Activated CD8-positive, alpha-beta T cell treated with anti-CD3 and anti-CD28 coated beads, Interleukin-2, amount 10 ng/mL, durations not matched to agents 7 days and 5 days (primary cell): ENCODE measurements at regions of chr5 and their contacts with region 1.

Region 1: DNA sequence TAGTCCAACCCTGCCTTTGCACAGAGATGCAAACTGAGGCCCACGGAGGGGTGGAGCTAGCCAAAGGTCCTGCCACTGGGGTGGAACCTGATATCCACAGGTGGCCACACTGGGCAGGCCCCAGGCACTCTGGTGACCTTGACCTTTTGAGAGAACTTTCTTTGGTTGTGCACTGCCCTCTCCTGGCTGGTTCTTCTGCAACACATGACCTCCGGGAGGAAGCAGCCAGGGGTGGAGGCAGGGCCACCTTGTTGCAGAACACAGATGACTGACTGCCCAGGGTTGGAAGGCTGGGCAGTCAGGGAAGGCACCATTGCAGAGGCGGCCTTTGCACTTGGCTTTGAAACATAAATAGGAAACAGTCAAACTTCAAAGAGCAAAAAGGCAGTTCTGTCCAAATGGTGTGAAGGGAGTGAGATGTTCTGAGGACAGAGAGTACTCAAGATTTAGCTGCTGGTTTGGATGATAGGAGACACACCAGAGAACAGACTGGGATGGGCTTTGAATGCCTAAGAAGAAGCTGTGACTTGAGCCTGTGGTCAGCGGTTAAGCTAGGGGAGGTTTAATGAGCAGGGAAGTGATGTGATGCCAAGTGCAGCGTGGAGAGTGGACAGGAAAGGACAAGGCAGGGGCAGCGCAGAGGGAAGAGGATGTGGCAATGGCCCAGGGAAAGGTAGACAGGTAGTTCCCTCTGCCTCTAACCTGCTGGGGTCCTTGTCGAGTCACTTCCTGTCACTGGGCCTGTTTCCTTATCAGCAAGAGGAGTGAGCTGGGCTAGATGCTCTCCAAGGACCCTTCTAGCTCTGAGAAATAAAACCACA is 6.8 kb upstream of the TCOF1 start:
- DNase-seq: peak; percentile 77
- ATAC-seq: peak; percentile 90
- H3K4me3 Mint-ChIP-seq: peak overlapping the region; percentile 22
- H3K27ac Mint-ChIP-seq: peak overlapping the region; percentile 89
- H3K4me1 Mint-ChIP-seq: peaks cover 30% of the 10 kb centered on the region
- H3K27me3 Mint-ChIP-seq: no peaks in the 10 kb centered on the region

Region 2: DNA sequence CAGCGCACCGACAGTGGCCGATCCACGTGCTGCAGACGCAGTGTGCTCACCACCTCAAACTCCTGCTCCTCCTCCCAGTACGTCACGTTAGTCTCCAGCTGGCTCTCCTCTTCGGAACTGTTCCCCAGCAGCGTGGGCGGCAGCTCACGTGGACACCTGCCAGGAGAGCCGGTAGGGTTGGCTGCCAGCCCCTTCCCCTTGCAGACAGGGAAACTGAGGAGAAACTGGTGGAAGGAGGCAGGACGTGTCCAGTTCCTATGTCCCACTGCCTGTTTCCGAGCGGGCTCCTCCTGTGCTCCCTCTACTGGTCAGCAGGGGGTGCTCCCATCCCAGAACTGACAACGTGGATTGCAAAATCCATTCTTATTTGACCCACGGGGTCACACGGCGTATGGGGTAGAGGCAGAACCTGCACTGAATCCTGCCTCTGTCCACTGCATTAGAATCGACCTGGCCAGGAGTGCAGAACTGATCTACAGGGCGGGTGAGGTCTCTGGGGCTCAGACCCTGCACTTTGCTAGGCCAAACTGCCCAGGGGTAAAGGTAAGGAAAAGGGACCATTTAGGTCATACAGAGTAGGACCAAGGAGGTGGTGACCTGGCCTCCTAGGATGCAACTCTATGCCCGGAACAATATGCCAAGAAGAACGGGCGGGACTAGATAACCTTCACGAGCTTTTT is 220.8 kb before region 1 on chr5:
- CTCF ChIA-PET with region 1: interaction called, 11 read pairs
- POLR2A ChIA-PET with region 1: interaction called, 3 read pairs
- DNase-seq: peak; percentile 72
- ATAC-seq: peak; percentile 66
- H3K4me3 Mint-ChIP-seq: no peak overlapping the region
- H3K27ac Mint-ChIP-seq: no peak overlapping the region
- H3K4me1 Mint-ChIP-seq: peaks cover 15% of the 10 kb centered on the region
- H3K27me3 Mint-ChIP-seq: no peaks in the 10 kb centered on the region

Region 3: DNA sequence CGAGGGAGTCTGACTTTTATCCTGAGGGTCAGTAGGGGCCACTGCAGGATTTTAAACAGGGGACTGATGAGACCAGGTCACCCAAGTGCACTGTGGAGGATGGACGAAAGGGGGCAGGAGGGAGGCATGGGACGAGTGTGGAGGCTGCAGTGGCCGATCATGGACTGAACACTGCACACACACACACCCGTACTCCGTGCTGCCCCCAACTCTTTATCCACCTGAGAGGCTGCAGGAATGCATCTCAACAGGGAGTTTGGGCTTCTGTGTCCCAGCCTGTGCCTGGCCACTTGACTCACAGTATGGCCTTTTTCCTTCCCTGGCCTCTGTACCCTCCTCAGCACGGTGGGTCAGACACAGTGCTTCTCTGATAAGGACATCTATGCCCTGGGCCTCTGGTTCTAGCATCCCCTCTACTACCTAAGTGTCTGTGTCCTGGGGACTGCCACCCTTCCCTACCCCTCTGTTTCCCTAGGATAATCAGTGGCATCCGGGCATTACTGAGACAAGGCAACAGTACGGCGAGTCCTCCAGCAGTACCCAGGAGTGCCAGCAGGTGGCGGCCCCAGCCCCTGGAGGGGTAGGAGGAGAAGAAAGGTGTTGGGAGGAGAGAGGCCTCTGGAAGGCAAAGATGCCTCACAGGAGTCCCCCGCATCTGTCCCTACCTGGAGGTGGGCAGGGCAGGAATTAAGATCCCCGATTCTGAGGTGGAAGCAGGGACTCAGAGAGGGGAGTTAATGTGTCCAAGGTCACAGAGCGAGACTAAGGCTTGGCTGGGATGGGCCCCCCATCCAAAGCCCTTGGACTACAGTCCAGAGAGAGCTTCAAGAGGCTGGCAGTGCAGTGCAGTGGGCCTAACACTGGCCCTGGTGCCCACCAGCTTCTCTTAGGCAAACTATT is 189.2 kb before region 1 on chr5:
- CTCF ChIA-PET with region 1: interaction called, 11 read pairs
- POLR2A ChIA-PET with region 1: no interaction called
- DNase-seq: peak; percentile 90
- ATAC-seq: peak; percentile 94
- H3K4me3 Mint-ChIP-seq: no peak overlapping the region
- H3K27ac Mint-ChIP-seq: no peak overlapping the region
- H3K4me1 Mint-ChIP-seq: peaks cover 12% of the 10 kb centered on the region
- H3K27me3 Mint-ChIP-seq: peaks cover 16% of the 10 kb centered on the region

Region 4: GRCh38 chr5:150333400-150333799 is 17.3 kb before region 1 on chr5:
- CTCF ChIA-PET with region 1: interaction called, 11 read pairs
- POLR2A ChIA-PET with region 1: no interaction called
- DNase-seq: no peak
- ATAC-seq: no peak
- H3K4me3 Mint-ChIP-seq: no peak overlapping the region
- H3K27ac Mint-ChIP-seq: no peak overlapping the region
- H3K4me1 Mint-ChIP-seq: peaks cover 4% of the 10 kb centered on the region
- H3K27me3 Mint-ChIP-seq: peaks cover 15% of the 10 kb centered on the region

Region 5: DNA sequence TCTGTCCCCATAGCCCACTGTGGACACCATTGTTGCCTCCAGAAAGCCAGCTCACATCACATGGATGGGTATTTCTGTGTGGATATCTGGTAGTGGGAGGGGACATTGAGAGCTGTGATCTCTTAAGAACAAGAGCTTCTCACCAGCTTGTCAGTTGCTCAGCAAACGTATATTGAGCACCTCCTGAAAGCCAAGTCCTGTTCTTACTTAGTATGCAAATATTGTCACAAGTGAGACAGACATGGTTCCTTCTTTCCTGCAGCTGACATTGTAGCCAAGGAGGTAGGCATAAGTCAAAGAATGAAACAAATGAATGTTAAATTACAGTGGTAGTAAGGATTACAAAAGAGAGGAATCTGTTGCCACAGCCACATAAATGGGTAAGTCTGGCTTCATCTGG is 10.6 kb after region 1 on chr5:
- CTCF ChIA-PET with region 1: interaction called, 14 read pairs
- POLR2A ChIA-PET with region 1: interaction called, 4 read pairs
- DNase-seq: no peak
- ATAC-seq: no peak
- H3K4me3 Mint-ChIP-seq: no peak overlapping the region
- H3K27ac Mint-ChIP-seq: no peak overlapping the region
- H3K4me1 Mint-ChIP-seq: peaks cover 40% of the 10 kb centered on the region
- H3K27me3 Mint-ChIP-seq: no peaks in the 10 kb centered on the region